ENCODE measurements at regions of chr14 and their contacts with region 1.

Region 1: DNA sequence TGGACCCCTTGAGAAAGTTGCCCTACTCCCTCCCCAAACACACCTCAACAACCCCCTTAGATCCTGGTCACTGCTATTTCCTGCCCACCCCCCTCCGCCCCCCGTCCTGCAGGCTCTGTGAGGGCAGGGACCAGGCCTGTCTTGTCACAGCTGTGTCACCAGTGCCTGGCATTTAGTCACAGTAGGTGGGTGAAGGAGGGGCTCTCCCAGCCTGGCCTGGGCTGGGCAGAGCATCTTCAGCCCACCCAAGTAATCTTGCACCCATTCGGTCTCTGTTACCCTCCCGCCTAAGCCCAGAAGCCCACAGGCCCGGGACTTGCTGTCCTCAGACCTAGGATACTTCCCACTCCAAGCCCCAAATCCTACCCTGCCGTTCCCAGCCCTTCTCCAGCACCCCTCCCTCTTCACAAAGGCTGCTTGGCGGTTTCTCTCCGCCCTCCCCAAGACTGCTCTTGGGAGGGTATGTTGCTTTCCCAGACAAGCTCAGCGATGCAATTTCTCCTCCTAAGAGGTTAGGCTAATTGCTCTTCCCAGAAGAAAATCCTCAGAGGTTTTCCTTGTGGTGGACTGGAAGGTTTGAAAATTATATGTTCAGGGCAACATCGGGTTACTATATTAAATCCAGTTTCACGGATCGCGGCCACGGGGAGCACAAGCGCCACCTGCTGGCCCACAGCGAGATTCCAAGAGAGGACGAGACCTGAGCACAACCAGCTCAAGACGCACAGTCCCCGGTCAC is 50.8 kb upstream of the ZFP36L1 start:
- DNase-seq: peak; percentile 79
- CTCF ChIP-seq: peak; percentile 92

Region 2: GRCh38 chr14:67729072-67729885 is 1114.4 kb before region 1 on chr14:
- CTCF ChIA-PET with region 1: no interaction called
- POLR2A ChIA-PET with region 1: no interaction called
- DNase-seq: no peak
- CTCF ChIP-seq: no peak

Region 3: GRCh38 chr14:67934008-67934481 is 909.6 kb before region 1 on chr14:
- CTCF ChIA-PET with region 1: interaction called, 17 read pairs
- POLR2A ChIA-PET with region 1: no interaction called
- DNase-seq: peak; percentile 40
- CTCF ChIP-seq: peak; percentile 44

Region 4: DNA sequence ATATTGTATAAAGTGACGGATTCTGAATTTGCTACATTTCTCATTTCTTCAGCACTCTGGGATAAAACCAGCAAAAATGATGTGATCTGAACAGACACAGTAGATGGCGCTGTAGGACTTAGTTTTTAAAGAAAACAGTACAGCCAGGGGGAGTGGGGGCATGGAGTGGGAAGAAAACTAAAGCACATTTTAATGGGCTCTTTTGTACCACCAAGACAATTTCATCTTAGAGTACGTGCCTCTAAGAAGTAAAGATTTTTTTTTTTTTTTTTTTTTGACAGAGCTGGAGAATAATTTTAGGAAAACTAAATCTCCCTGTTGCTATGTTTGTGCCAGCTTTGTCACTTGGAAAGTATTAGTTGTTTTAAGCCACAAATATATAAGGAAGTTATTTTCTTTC is 899.7 kb before region 1 on chr14:
- CTCF ChIA-PET with region 1: interaction called, 14 read pairs
- POLR2A ChIA-PET with region 1: no interaction called
- DNase-seq: peak; percentile 39
- CTCF ChIP-seq: peak; percentile 82

Region 5: DNA sequence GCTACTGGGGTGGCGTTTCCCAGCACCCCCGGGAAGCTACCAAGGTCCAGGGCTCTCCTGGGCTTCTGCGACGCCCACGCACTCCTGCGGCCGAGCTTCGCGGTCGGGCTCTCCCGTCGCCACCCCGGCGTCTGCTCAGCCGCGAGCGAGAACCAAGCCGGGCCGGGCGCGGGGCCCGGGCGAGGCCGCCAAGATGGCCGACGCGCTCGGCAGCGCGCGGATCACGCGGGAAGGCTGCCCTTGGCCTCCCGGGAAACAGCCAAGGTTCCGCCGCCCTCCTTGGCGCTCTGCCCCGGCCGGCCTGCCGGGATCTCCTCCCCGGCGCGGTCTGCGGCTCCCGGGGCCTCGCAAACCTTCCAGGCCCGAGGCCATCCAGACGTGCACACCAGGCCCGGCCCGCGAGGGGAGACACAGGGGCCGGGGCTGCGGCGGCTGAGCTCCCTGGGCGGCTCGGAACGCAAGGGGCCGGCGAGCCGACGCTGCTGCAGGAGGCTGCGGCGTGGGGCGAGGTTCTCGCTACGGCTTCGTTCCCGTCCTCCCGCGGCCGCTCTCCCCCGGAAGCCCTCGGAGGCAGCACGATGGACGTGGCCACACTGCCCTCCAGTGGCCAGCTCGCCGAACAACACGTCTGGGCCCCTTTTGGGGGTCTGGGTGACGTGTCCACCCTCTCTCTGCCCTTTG is 27.2 kb before region 1 on chr14:
- CTCF ChIA-PET with region 1: interaction called, 73 read pairs
- POLR2A ChIA-PET with region 1: no interaction called
- DNase-seq: peak; percentile 89
- CTCF ChIP-seq: peak; percentile 90

Region 6: GRCh38 chr14:68824517-68825347 is 18.9 kb before region 1 on chr14:
- CTCF ChIA-PET with region 1: interaction called, 73 read pairs
- POLR2A ChIA-PET with region 1: no interaction called
- DNase-seq: peak; percentile 58
- CTCF ChIP-seq: peak; percentile 91

Region 7: GRCh38 chr14:68854421-68854820 is 10.8 kb after region 1 on chr14:
- CTCF ChIA-PET with region 1: interaction called, 19 read pairs
- POLR2A ChIA-PET with region 1: no interaction called
- DNase-seq: no peak
- CTCF ChIP-seq: no peak

Region 8: DNA sequence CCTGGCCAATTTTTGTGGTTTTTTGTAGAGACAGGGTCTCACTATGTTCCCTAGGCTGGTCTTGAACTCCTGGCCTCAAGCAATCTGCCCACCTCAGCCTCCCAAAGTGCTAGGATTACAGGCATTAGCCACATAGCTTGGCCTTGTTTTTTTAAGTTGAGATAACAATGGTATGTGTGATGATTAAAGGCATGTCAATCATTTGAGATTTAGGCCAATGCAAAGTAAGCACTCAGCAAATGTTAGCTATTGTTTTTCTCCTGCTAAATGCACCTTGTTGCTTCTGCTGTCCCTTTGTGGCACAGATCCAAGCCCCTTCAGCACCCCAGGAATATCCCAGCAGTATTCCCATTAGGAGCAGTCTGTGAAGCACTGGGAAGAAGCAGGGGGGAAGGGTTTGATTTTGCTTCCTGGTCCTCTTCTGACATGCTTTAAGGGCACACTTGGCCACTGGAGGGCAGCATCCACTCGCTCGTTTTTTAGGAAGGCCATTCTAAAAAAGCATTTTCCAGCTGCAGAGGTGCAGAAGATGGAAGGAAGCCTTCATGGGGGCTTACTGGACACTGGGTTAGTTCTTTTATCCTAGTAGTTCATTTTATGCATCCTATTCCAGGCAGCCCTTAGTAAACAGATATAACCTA is 19.4 kb after region 1 on chr14:
- CTCF ChIA-PET with region 1: interaction called, 18 read pairs
- POLR2A ChIA-PET with region 1: no interaction called
- DNase-seq: peak; percentile 75
- CTCF ChIP-seq: peak; percentile 70